ENCODE measurements at regions of chr7 and their contacts with region 1.

Region 1: GRCh38 chr7:25002786-25003185 is 22.8 kb upstream of the OSBPL3 start:
- DNase-seq: no peak
- H3K4me3 ChIP-seq: no peak overlapping the region
- H3K27ac ChIP-seq: no peak overlapping the region
- H3K4me1 ChIP-seq: no peaks in the 10 kb centered on the region
- H3K27me3 ChIP-seq: no peaks in the 10 kb centered on the region
- CTCF ChIP-seq: no peak
- EP300 ChIP-seq: no peak
- POLR2A ChIP-seq: no peak

Region 2: GRCh38 chr7:23216021-23216420 is 1786.8 kb before region 1 on chr7:
- in situ Hi-C with region 1: no loop called
- intact Hi-C with region 1: no loop called
- DNase-seq: peak; percentile 26
- H3K4me3 ChIP-seq: no peak overlapping the region
- H3K27ac ChIP-seq: no peak overlapping the region
- H3K4me1 ChIP-seq: peaks cover 0 to 17% (median 2%) of the 10 kb centered on the region in 4 donors
- H3K27me3 ChIP-seq: no peaks in the 10 kb centered on the region
- CTCF ChIP-seq: no peak
- EP300 ChIP-seq: no peak
- POLR2A ChIP-seq: no peak

Region 3: GRCh38 chr7:23941551-23941950 is 1061.2 kb before region 1 on chr7:
- in situ Hi-C with region 1: no loop called
- intact Hi-C with region 1: no loop called
- DNase-seq: no peak
- H3K4me3 ChIP-seq: no peak overlapping the region
- H3K27ac ChIP-seq: no peak overlapping the region
- H3K4me1 ChIP-seq: no peaks in the 10 kb centered on the region
- H3K27me3 ChIP-seq: no peaks in the 10 kb centered on the region
- CTCF ChIP-seq: no peak
- EP300 ChIP-seq: no peak
- POLR2A ChIP-seq: no peak

Region 4: GRCh38 chr7:24721481-24722022 is 281.2 kb before region 1 on chr7:
- in situ Hi-C with region 1: no loop called
- intact Hi-C with region 1: loop called (anchors 2 kb)
- DNase-seq: no peak
- H3K4me3 ChIP-seq: no peak overlapping the region
- H3K27ac ChIP-seq: no peak overlapping the region
- H3K4me1 ChIP-seq: no peaks in the 10 kb centered on the region
- H3K27me3 ChIP-seq: no peaks in the 10 kb centered on the region
- CTCF ChIP-seq: no peak
- EP300 ChIP-seq: no peak
- POLR2A ChIP-seq: no peak